Lower leg skin (tissue), 4 donors: ENCODE measurements at regions of chr2 and their contacts with region 1.

Region 1: DNA sequence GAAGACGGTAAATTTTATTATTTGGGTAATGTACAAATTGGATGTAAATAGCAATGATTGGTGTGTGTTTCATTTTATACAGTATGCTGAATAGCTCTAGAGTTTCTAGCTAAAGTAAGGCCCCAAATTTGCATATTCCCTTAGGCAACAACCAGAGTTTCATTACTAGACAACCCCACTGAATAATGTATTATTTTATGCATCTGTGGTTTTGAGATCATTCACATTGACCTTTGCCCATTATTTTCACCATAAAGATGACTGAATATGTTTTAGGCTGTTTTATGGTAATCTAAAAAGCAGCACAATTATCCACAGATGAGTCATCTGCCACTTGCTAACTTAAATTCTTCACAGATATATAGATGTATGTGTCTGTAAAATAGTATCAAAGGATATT is 44.5 kb upstream of the C2orf74 start:
- DNase-seq: no peak
- H3K4me3 ChIP-seq: no peak overlapping the region
- CTCF ChIP-seq: no peak
- POLR2A ChIP-seq: no peak

Region 2: DNA sequence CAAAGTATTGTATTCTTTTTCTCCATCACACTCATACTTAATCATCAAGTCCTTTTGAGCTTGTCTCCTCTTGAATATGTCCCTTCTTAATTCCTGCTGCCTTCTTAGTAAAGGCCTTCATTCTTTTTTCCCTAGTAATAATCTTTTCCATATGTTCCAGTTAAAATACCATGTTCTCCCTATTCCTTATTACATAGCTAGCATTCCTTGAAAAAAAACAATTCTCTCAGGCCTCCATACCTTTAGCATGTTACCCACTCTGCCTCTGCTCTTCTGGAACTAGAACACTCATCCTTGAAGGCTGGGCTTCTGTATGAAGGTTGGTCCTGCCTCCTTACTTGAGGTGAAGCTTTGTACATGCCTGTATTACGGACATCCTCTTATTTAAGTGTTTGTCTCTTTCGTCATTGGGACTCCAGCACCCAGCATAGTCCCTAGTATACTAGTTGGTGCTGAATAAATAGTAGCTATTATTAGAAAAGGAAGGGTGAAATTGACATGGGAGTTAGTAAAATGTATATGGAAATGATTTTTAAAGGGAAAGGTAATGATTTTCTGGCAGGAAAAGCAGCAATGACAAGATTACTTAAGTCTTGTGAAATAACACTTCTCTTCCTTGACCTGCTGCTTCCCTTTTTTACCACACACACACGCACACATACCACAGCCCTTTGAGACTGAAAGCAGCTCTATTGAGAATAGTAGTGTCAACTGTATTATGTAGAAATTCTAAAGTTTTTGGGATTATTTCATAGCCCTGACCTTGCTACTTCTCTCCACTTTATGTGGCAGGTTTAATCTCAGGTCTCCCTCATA is 190.6 kb before region 1 on chr2:
- intact Hi-C with region 1: no loop called
- DNase-seq: no peak
- H3K4me3 ChIP-seq: no peak overlapping the region
- CTCF ChIP-seq: no peak
- POLR2A ChIP-seq: no peak

Region 3: GRCh38 chr2:63050334-63051041 is 1933.0 kb after region 1 on chr2 and contains the start of gene OTX1:
- intact Hi-C with region 1: loop called (anchors 10 kb)
- DNase-seq: peak in 1 of 2 donors; percentile 90
- H3K4me3 ChIP-seq: peak within 1 kb of the TSS; percentile 66
- CTCF ChIP-seq: no peak
- POLR2A ChIP-seq: no peak
- total RNA-seq, gene OTX1: 5.3 to 9.2 (median 8.0) TPM